Right ventricle myocardium inferior (tissue), 1 donor: ENCODE measurements at regions of chr20 and their contacts with region 1.

Region 1: DNA sequence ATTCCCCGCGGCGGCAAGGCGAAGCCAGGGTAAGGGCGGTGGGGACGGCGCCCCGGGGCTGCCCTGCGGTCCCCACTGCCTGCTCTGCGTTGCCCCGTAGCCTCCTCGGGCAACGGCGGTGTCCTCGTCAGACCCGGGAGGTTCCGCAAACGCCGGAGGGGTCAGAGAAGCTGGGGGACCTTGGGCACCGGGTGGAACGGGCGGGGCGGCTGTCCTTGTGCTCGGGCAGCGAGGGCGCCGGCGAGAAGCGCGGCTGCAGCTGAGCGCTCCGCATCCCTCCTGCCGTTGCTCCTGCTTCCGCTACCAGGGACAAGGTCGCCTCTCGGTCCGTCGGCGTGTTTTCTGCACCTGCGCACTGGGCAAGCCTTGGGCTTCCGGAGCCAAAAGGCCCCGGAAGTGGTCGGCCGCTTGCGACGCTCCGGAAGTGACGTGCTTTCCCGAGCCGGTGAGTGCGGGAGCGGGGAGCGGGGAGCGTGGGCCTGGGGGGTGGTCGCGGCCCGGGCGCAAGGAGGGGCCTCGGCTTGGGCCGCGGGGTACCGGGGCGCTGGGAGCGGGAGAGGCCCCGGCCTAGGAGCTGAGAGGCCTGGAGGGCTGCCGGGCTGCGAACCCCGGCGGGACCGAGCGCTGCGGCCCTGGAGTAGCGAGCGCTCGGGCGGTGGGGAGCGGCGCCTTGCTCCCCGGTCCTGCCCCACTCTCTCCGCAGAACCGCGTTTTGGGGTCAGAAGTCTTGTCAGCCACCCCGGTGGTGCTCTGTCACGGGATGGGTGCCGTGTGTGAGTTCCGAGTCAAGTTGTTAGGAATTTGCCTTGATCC is at the start of gene MTG2:
- DNase-seq: peak; percentile 96
- ATAC-seq: peak; percentile 97
- total RNA-seq, gene MTG2: 21.6 TPM

Region 2: DNA sequence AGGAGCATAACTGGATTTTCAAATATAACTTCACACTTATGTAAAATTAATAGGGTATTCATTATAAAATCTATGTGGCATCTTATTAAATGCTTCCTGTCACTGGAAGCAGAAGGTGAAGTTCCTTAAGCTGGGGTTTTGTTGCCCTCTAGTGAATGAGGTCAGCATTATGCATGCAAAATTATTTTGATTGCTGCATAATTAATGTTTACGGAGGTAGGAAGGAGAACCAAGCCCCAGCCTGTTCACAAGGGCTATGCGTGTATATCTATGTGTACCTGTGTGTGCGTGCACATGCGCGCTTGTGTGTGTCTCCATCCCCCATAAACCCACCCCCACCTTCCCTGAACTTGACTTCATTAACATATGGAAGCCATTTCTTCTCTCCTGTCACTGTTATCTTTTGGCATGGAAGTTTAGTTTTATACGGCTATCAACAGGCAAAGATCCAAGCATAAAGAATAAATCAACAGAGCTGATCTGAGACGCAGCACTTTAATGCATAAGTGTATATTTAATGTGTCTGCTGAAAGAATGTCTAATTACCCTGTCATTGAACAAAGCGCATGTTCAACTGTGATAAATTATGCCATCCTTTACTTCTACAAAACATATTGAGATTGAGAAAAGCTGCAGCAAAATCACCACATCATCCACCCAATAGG is 1021.0 kb before region 1 on chr20:
- intact Hi-C with region 1: no loop called
- DNase-seq: no peak
- ATAC-seq: no peak

Region 3: DNA sequence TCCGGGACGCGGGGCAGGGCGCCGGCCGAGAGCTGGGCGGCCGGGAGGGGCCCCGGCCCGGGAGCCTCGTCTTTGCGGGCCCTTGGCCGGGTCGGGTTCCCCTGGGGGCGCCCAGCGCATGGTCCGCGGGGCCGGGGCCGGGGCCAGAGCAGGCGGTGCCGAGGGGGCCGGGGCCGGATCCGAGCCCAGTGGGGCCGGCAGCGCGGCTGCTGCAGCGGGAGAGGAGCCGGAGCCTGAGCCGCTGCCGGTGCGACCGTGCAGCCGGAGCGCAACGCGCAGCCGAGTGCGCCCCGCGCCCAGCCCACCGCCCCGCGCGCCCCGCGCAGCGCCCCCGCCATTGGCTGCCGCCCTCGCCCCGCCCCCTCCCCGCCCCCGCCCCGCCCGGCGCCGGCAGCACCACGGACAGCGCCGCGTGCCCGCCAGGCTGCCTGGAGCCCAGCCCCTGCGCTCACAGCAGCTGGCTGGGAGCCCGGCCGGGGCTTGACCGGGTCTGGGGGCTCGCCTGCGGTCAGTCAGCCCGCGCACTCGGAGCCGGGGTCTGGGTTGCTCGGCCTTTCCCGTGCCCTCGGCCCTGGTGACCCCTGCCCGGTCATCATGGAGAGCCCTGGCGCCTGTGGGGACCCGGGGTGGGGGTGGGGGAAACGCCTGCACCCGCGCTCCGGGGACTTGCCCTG is 37.3 kb after region 1 on chr20 and contains the start of gene HRH3:
- intact Hi-C with region 1: loop called (anchors 2 kb)
- DNase-seq: no peak
- ATAC-seq: peak; percentile 65
- total RNA-seq, gene HRH3: not detected

Region 4: DNA sequence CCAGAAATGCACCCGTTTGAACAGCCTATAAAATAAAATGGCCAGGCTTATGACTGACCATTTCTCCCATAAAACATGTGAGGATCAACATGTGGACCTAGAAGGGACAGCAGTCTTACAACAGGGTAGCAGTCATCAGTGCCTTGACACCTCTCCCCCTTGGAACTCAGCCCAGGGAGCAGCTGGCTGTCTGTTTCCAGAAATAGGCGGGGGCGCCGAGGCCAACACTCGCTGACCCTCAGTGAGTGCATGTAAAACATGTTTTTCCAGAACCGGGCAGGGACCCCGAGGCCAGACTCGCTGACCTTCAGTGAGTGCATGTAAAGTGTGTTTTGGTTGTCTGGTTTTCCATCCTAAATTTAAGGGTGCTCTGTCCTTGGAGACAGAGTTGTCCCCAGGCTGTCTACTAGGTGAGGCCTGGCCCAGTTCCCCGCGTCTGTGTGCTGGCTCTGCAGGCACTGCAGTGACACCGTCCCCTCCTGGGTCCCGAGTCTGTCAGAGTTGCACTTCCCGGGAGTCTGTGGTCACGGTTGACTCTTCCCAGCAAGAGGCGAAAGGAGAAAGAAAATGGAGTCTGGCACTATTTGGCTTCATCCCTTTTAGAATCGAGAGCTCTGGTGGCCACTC is 100.2 kb after region 1 on chr20:
- intact Hi-C with region 1: loop called (anchors 5 kb)
- DNase-seq: no peak
- ATAC-seq: peak; percentile 82

Region 5: GRCh38 chr20:62386383-62387218 is 203.8 kb after region 1 on chr20 and contains the start of gene RPS21:
- intact Hi-C with region 1: loop called (anchors 10 kb)
- DNase-seq: peak; percentile 97
- ATAC-seq: peak; percentile 93
- total RNA-seq, gene RPS21: 782 TPM